IMR-90 (cell line): ENCODE measurements at regions of chr15 and their contacts with region 1.

Region 1: GRCh38 chr15:65792130-65792987 is at the start of gene DENND4A:
- DNase-seq: peak; percentile 98
- ATAC-seq: peak; percentile 94
- H3K4me3 ChIP-seq: peak within 1 kb of the TSS; percentile 61
- H3K27ac ChIP-seq: peak within 1 kb of the TSS; percentile 86
- H3K4me1 ChIP-seq: peaks cover 4% of the 10 kb centered on the region; the same call in 1 of the 2 replicates
- H3K27me3 ChIP-seq: no peaks in the 10 kb centered on the region
- CTCF ChIP-seq: no peak
- POLR2A ChIP-seq: peak; percentile 74
- RAD21 ChIP-seq: peak; percentile 13; the same call in 1 of the 2 replicates
- total RNA-seq, gene DENND4A: 17.7 and 18.6 TPM in 2 replicates

Region 2: GRCh38 chr15:65832549-65833364 is 40.4 kb after region 1 on chr15:
- CTCF ChIA-PET with region 1: no interaction called
- POLR2A ChIA-PET with region 1: no interaction called
- dilution Hi-C with region 1: no loop called
- in situ Hi-C with region 1: no loop called
- intact Hi-C with region 1: loop called (anchors 5 kb)
- DNase-seq: peak; percentile 90
- ATAC-seq: peak; percentile 90
- H3K4me3 ChIP-seq: peak overlapping the region; percentile 4; the same call in 1 of the 2 replicates
- H3K27ac ChIP-seq: peak overlapping the region; percentile 51
- H3K4me1 ChIP-seq: peaks cover 5% of the 10 kb centered on the region; the same call in 1 of the 2 replicates
- H3K27me3 ChIP-seq: no peaks in the 10 kb centered on the region
- CTCF ChIP-seq: peak; percentile 33; the same call in 1 of the 2 replicates
- POLR2A ChIP-seq: no peak
- RAD21 ChIP-seq: peak; percentile 27; the same call in 1 of the 2 replicates

Region 3: GRCh38 chr15:65856821-65857455 is 64.6 kb after region 1 on chr15:
- CTCF ChIA-PET with region 1: no interaction called
- POLR2A ChIA-PET with region 1: no interaction called
- dilution Hi-C with region 1: no loop called
- in situ Hi-C with region 1: no loop called
- intact Hi-C with region 1: loop called (anchors 5 kb)
- DNase-seq: peak; percentile 53
- ATAC-seq: no peak; the same call in 1 of the 2 replicates
- H3K4me3 ChIP-seq: no peak overlapping the region
- H3K27ac ChIP-seq: no peak overlapping the region
- H3K4me1 ChIP-seq: no peaks in the 10 kb centered on the region
- H3K27me3 ChIP-seq: peaks cover 1% of the 10 kb centered on the region; the same call in 1 of the 2 replicates
- CTCF ChIP-seq: peak; percentile 68
- POLR2A ChIP-seq: no peak
- RAD21 ChIP-seq: peak; percentile 73

Region 4: GRCh38 chr15:65869127-65869953 is 77.0 kb after region 1 on chr15 and contains the start of gene RAB11A:
- CTCF ChIA-PET with region 1: no interaction called
- POLR2A ChIA-PET with region 1: interaction called, 3 read pairs
- dilution Hi-C with region 1: no loop called
- in situ Hi-C with region 1: no loop called
- intact Hi-C with region 1: loop called (anchors 1 kb)
- DNase-seq: peak; percentile 96
- ATAC-seq: peak; percentile 92
- H3K4me3 ChIP-seq: peak within 1 kb of the TSS; percentile 58
- H3K27ac ChIP-seq: peak within 1 kb of the TSS; percentile 91
- H3K4me1 ChIP-seq: no peaks in the 10 kb centered on the region
- H3K27me3 ChIP-seq: no peaks in the 10 kb centered on the region
- CTCF ChIP-seq: peak; percentile 40
- POLR2A ChIP-seq: peak; percentile 99
- RAD21 ChIP-seq: no peak; the same call in 1 of the 2 replicates
- total RNA-seq, gene RAB11A: 376 and 462 TPM in 2 replicates